CD14-positive monocyte (primary cell): ENCODE measurements at regions of chr1 and their contacts with region 1.

Region 1: GRCh38 chr1:220690140-220691025 is at the start of gene C1orf115:
- DNase-seq: peak; percentile 52 to 70 (median 64)
- H3K4me3 ChIP-seq: peak within 1 kb of the TSS; percentile 38 to 83 (median 47)
- H3K4me3 Mint-ChIP-seq: peak within 1 kb of the TSS; percentile 91 to 93
- H3K27ac ChIP-seq: no peak within 1 kb of the TSS
- H3K27ac Mint-ChIP-seq: peak within 1 kb of the TSS in 1 of 7 donors; percentile 37
- H3K4me1 ChIP-seq: peaks cover 18 to 25% of the 10 kb centered on the region in 2 donors
- H3K4me1 Mint-ChIP-seq: peaks cover 19% of the 10 kb centered on the region
- H3K27me3 ChIP-seq: peaks cover 15 to 30% of the 10 kb centered on the region in 2 donors
- H3K27me3 Mint-ChIP-seq: peaks cover 17 to 35% (median 24%) of the 10 kb centered on the region in 3 donors
- CTCF ChIP-seq: peak; percentile 100
- polyA plus RNA-seq, gene C1orf115: 0.47 to 3.1 (median 1.9) TPM

Region 2: DNA sequence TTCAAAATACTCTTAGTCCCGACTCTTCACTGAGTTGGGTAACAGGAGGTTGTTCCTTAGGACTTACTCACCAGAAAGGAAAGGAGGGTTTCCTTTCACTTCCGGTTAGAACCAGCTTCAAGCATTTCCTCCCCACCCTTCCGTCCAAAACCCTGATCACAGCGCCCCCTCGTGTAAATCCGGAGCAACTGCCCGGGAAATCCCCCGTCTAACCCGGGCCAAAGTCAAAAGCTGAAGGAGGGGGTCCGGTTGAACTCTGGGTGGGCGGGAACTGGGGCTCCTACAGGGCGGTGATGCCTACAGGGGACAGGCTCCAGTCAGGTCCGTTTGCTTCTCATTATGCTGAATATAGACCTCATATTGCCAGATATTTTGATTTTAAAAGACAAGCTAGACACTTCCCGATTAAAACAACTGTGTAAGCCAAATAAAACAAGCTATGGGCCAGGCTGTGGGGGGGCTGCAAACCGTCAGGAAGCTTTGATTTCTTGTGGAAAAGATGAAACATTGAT is 42.8 kb after region 1 on chr1:
- intact Hi-C with region 1: loop called in 1 of 2 experiments (anchors 5 kb)
- DNase-seq: peak; percentile 73 to 95 (median 92)
- H3K4me3 ChIP-seq: peak overlapping the region in 1 of 3 experiments; percentile 55
- H3K4me3 Mint-ChIP-seq: peak overlapping the region in 1 of 2 donors; percentile 65
- H3K27ac ChIP-seq: no peak overlapping the region
- H3K27ac Mint-ChIP-seq: peak overlapping the region in 6 of 7 donors; percentile 22 to 90 (median 64)
- H3K4me1 ChIP-seq: peaks cover 25 to 29% of the 10 kb centered on the region in 2 donors
- H3K4me1 Mint-ChIP-seq: peaks cover 31% of the 10 kb centered on the region
- H3K27me3 ChIP-seq: no peaks in the 10 kb centered on the region
- H3K27me3 Mint-ChIP-seq: peaks cover under 1 to 9% (median 3%) of the 10 kb centered on the region in 3 donors
- CTCF ChIP-seq: peak; percentile 91

Region 3: GRCh38 chr1:220776720-220777326 is 86.4 kb after region 1 on chr1:
- intact Hi-C with region 1: loop called (anchors 2 to 5 kb)
- DNase-seq: peak; percentile 54 to 71 (median 67)
- H3K4me3 ChIP-seq: no peak overlapping the region
- H3K4me3 Mint-ChIP-seq: no peak overlapping the region
- H3K27ac ChIP-seq: no peak overlapping the region
- H3K27ac Mint-ChIP-seq: peak overlapping the region in 4 of 7 donors; percentile 6 to 89 (median 82)
- H3K4me1 ChIP-seq: peaks cover 26 to 29% of the 10 kb centered on the region in 2 donors
- H3K4me1 Mint-ChIP-seq: peaks cover 32% of the 10 kb centered on the region
- H3K27me3 ChIP-seq: no peaks in the 10 kb centered on the region
- H3K27me3 Mint-ChIP-seq: peaks cover 0 to 5% (median 0%) of the 10 kb centered on the region in 3 donors
- CTCF ChIP-seq: peak; percentile 94